ENCODE measurements at regions of chr13 and their contacts with region 1.

Region 1: GRCh38 chr13:32586080-32586900 is at the start of gene PDS5B:
- DNase-seq: peak; percentile 93
- H3K4me3 Mint-ChIP-seq: peak within 1 kb of the TSS; percentile 95
- H3K27ac Mint-ChIP-seq: peak within 1 kb of the TSS; percentile 96
- H3K4me1 Mint-ChIP-seq: peaks cover 45% of the 10 kb centered on the region
- H3K27me3 Mint-ChIP-seq: peaks cover 16% of the 10 kb centered on the region
- total RNA-seq, gene PDS5B: 57.8 and 62.7 TPM in 2 replicates

Region 2: GRCh38 chr13:32031025-32031814 is 555.1 kb before region 1 on chr13 and contains the start of gene FRY:
- intact Hi-C with region 1: loop called (anchors 10 kb)
- DNase-seq: peak; percentile 44
- H3K4me3 Mint-ChIP-seq: peak within 1 kb of the TSS; percentile 94
- H3K27ac Mint-ChIP-seq: peak within 1 kb of the TSS; percentile 82
- H3K4me1 Mint-ChIP-seq: peaks cover 52% of the 10 kb centered on the region
- H3K27me3 Mint-ChIP-seq: peaks cover 6% of the 10 kb centered on the region
- total RNA-seq, gene FRY: 2.4 and 3.2 TPM in 2 replicates

Region 3: DNA sequence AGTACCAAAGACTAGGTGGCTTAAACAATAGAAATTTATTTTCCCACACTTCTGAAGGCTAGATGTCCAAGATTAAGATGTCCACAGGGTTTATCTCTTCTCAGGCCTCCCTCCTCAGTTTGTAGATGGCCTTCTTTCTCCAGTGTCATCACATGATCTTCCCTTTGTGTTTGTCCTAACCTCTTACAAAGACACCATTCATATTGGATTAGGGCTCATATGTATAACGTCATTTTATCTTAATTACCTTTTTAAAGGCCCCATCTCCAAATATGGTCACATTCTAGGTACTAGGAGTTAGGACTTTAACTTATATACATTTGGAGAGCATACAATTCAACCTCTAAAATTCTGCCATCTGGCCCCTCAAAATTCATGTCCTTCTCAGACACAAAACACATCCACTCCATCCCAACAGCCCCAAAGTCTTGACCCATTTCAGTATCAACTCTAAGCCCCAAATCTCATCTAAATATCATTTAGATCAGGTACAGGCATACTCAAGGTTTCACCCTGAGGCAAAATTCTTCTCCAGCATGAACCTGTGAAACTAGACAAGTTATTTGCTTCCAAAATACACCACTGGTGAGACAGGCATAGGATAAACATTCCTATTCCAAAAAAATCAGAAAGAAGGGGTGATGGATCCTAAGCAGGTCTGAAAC is 81.9 kb before region 1 on chr13:
- intact Hi-C with region 1: no loop called
- DNase-seq: no peak
- H3K4me3 Mint-ChIP-seq: no peak overlapping the region
- H3K27ac Mint-ChIP-seq: no peak overlapping the region
- H3K4me1 Mint-ChIP-seq: no peaks in the 10 kb centered on the region
- H3K27me3 Mint-ChIP-seq: no peaks in the 10 kb centered on the region

Region 4: DNA sequence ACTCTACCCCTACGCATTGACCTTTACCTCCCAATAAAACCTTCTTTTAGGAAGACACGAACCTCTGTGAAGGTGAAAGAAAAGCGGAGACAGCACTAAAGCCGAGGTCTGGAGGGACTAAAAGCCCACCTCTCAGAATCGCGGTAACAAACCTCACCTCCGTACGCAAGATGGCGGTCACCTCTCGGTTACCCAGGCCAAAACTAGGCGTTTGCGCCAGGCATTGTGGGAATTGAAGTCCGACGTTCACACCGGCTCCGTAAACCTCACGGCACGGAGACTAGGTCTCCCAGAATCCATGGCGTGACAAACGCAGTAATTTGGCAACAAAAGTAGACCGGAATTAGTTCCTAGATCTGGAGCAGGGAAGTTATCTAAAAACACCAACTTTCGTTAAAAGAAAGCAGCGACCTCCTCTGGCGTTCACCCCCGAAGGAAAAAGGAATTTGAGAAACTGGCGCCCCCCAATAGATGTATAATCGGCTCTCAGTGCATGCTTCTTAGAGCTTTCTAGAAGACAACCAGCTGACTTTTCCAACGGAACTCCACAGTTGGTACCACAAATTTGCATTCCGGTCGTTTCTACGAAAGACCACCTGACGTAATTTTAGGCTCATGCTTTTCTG is 47.6 kb before region 1 on chr13 and contains the start of gene N4BP2L2:
- intact Hi-C with region 1: loop called (anchors 1 kb)
- DNase-seq: peak; percentile 88
- H3K4me3 Mint-ChIP-seq: peak within 1 kb of the TSS; percentile 96
- H3K27ac Mint-ChIP-seq: peak within 1 kb of the TSS; percentile 99
- H3K4me1 Mint-ChIP-seq: peaks cover 46% of the 10 kb centered on the region
- H3K27me3 Mint-ChIP-seq: peaks cover 8% of the 10 kb centered on the region
- total RNA-seq, gene N4BP2L2: 87.1 and 92.8 TPM in 2 replicates

Region 5: DNA sequence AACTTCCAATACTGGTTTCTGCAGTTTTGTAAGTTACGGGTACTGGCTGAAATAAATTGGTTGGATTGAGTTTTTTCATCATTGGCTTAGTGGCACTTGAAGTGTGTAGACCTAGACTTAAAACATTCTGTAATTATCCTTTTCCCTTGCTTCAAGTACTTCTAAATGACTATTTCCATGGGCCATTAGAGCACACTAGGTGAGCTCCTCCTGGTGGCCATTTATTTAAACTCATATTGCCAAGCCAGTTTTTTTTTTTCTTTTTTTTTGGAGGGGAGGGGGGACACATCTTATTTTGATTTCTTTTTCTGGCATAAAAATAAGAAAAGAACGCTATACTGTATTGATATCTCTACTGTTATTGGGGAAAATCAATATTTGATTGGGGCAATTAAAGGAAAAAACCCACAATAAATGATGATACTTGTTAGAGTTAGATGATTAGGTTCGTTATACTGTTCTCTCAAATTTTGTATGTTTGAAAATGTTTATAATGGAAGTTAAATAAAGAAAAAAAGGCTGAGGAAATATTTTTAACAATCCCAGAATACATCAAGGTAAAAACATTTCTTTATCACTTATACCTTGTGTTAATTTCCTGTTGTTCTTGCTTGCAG is 82.8 kb after region 1 on chr13:
- intact Hi-C with region 1: loop called (anchors 1 kb)
- DNase-seq: no peak
- H3K4me3 Mint-ChIP-seq: no peak overlapping the region
- H3K27ac Mint-ChIP-seq: no peak overlapping the region
- H3K4me1 Mint-ChIP-seq: peaks cover 4% of the 10 kb centered on the region
- H3K27me3 Mint-ChIP-seq: no peaks in the 10 kb centered on the region

Region 6: GRCh38 chr13:33017323-33017929 is 431.1 kb after region 1 on chr13:
- intact Hi-C with region 1: loop called (anchors 1 kb)
- DNase-seq: peak; percentile 29
- H3K4me3 Mint-ChIP-seq: peak overlapping the region; percentile 78
- H3K27ac Mint-ChIP-seq: peak overlapping the region; percentile 41
- H3K4me1 Mint-ChIP-seq: peaks cover 21% of the 10 kb centered on the region
- H3K27me3 Mint-ChIP-seq: peaks cover 56% of the 10 kb centered on the region

Region 7: DNA sequence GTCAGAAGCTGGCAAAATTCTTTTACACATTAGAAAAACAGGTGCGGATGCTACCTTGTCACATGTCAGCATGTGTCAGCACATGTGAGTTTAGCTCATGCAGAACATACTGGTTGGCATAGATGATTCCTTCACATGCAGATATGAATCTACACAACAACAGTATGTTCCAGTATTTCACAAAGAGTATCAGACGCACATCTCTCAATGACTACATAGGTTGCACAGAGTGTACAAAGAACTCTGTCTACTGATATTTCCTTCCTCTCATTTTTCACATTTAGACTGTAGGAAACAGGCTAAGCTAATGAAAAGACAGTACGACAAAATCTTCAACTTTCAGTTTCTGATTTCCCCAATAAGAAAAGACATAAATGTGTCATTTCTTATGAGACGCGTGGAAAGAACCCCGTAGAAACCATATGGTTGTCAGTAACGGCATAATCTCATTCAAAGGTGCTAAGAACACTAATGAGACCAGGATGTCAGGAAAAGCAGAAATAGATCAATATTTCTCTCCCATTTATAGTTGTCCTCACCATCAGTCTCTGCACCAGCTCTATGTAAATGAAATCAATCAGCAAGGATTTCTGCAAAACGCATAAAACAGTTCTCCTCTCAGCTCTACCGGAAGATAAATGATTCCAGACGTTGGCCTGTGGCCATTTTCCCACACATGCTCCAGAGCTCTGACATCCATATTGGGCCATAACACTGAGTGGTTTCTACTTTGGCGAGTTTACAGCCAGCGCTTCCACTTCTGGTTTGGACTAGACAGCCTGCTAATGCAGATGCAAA is 618.0 kb after region 1 on chr13:
- intact Hi-C with region 1: loop called (anchors 5 kb)
- DNase-seq: no peak
- H3K4me3 Mint-ChIP-seq: peak overlapping the region; percentile 78
- H3K27ac Mint-ChIP-seq: peak overlapping the region; percentile 76
- H3K4me1 Mint-ChIP-seq: peaks cover 65% of the 10 kb centered on the region
- H3K27me3 Mint-ChIP-seq: no peaks in the 10 kb centered on the region

Region 8: DNA sequence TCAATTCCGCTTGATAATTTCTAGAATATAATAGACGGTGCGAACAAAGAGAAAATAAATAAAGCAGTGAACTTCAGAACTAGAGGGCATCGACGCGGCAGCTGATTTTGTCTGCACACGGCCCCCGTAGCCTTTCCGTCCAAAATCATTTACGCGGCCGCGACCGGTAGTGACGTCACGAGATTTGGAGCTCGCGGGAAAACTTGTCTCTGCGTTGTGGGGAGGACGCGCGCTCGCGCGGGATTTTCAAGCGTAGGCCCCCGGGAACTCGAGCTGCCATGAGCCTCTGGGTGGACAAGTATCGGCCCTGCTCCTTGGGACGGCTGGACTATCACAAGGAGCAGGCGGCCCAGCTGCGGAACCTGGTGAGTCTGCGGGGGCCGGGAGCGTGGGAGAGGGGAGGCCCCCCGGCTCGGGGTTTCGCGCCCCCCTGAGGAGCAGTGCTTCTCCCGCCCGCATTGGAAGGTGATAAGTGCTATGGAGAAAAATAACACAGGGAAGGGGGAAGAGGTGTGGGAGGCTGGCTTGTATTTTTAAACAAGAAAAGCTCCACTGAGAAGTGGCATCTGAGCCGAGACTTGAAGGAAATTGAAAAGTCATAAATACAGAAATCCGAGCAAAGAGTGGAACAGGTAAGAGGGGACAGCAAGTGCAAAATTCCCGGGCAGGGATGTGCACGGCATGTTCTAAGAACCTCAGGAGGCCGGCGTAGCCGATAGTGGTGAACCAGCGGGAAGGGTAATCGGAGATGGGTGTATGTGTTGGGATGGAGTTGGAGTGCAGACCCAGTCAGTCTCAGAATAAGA is 1231.8 kb after region 1 on chr13 and contains the start of gene RFC3:
- intact Hi-C with region 1: loop called (anchors 5 kb)
- DNase-seq: peak; percentile 90
- H3K4me3 Mint-ChIP-seq: peak within 1 kb of the TSS; percentile 97
- H3K27ac Mint-ChIP-seq: peak within 1 kb of the TSS; percentile 90
- H3K4me1 Mint-ChIP-seq: peaks cover 46% of the 10 kb centered on the region
- H3K27me3 Mint-ChIP-seq: peaks cover 8% of the 10 kb centered on the region
- total RNA-seq, gene RFC3: 74.7 and 78.0 TPM in 2 replicates

Measured in activated T-helper 1 cell treated with anti-CD3 and anti-CD28 coated beads, Interleukin-12 subunit alpha, Interleukin-12 subunit beta, Interleukin-2, Interleukin-4 antibody, amounts not matched to agents 30 ng/mL and 10 ng/mL and 1 ng/mL, durations not matched to agents 14 hours and 24 hours and 36 hours (primary cell).